Astrocyte of the cerebellum (primary cell): ENCODE measurements at regions of chr4 and their contacts with region 1.

Region 1: GRCh38 chr4:24489870-24490269 is 94.5 kb downstream of the DHX15 start:
- DNase-seq: no peak
- H3K4me3 ChIP-seq: no peak overlapping the region
- CTCF ChIP-seq: no peak

Region 2: DNA sequence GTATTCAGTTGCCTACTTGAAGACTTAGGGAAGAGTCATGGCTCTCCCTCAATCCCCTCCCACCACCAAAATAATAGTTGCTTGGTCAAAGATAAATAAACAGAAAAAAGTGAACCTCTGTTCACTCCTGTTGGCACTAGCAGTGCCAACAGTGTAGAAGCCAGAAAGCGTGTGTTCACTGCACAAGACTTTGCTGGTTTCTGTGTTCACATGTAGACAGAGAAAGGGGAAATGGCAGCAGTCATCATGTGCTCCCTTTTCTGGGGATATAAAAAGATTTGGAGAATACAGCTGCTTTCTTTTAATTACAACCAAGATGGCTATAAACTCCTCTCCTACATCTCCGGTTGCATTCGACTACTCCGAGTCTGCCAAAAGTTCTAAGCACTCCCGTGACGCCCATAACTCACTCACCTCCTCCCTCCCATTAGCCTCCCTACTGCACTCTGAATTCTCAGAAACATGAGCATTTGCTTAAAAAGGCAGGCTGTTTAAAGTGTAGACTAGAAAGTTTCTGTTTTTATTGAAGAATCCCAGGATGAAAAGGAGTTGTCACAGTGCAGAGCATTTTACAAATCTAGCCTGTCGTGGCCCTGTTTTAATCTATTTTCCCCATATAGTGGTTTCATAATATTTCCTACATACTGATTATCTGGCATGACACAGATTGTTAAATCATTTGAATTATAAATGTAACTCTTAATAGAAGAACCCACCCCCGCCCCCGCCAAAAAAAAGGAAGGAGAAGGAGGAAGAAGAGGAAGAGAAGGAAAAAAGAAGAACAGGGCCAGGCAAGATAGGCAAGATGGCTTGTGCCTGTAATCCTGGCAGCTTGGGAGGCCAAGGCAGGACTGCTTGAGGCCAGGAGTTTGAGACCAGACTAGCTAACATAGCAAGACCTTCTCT is 524.1 kb after region 1 on chr4:
- in situ Hi-C with region 1: loop called (anchors 10 kb)
- DNase-seq: no peak
- H3K4me3 ChIP-seq: no peak overlapping the region
- CTCF ChIP-seq: no peak